ENCODE measurements at regions of chr1 and their contacts with region 1.

Region 1: DNA sequence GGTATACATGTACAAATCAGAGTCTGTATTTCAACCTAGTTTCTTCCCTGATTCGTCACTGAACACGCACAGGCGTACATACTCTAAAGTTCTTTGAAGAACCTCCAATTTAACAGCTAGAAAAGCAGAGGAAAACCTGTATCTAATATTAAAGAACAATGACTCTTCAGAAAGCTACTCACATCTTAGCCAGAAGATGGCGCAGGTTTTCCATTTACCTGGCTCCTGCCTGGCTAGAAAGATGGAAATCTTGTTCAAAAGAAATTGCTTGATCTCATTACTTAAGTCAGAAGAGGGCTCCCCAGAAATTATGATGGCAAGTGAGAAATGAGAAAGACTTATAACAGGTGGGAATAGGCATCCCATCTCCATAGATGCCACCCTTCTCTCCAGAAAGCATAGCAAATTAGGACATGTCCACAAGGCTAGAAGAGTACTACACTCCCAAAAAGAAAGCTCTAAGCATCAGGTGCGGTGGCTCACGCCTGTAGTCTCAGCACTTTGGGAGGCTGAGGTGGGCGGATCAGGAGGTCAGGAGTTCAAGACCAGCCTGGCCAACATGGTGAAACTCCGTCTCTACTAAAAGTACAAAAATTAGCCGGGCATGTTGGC is 19.0 kb upstream of the L1TD1 start:
- DNase-seq: peak; percentile 22 to 31
- H3K4me3 ChIP-seq: no peak overlapping the region
- H3K27ac ChIP-seq: no peak overlapping the region
- H3K4me1 ChIP-seq: no peaks in the 10 kb centered on the region
- H3K27me3 ChIP-seq: no peaks in the 10 kb centered on the region
- CTCF ChIP-seq: peak; percentile 39 to 85 (median 78)
- POLR2A ChIP-seq: no peak

Region 2: DNA sequence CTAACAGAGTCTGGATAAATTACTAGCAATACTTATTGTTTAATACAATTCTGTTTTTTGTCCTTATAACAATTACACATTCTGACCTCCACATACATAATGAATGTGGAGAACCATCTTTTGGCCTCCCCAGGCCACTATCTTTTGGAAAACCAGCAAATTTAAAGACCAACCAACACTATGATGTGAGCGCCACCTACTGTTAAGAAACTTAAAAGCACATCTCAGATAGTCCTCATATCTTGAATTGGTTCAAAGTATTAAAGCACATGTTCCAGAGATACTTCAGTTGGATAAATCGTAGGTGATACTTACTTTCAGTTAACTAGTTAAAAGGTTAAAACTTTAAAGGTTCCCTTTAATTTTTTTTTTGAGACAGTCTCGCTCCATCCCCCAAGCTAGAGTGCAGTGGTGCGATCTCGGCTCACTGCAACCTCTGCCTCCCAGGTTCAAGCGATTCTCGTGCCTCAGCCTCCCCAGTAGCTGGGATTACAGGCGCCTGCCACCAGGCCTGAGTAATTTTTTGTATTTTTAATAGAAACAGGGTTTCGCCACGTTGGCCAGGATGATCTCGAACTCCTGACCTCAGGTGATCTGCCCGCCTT is 231.8 kb after region 1 on chr1:
- intact Hi-C with region 1: loop called (anchors 2 kb)
- DNase-seq: no peak
- H3K4me3 ChIP-seq: no peak overlapping the region
- H3K27ac ChIP-seq: no peak overlapping the region
- H3K4me1 ChIP-seq: no peaks in the 10 kb centered on the region
- H3K27me3 ChIP-seq: no peaks in the 10 kb centered on the region
- CTCF ChIP-seq: peak; percentile 53 to 85 (median 74)
- POLR2A ChIP-seq: no peak